ENCODE measurements at regions of chr15 and their contacts with region 1.

Region 1: DNA sequence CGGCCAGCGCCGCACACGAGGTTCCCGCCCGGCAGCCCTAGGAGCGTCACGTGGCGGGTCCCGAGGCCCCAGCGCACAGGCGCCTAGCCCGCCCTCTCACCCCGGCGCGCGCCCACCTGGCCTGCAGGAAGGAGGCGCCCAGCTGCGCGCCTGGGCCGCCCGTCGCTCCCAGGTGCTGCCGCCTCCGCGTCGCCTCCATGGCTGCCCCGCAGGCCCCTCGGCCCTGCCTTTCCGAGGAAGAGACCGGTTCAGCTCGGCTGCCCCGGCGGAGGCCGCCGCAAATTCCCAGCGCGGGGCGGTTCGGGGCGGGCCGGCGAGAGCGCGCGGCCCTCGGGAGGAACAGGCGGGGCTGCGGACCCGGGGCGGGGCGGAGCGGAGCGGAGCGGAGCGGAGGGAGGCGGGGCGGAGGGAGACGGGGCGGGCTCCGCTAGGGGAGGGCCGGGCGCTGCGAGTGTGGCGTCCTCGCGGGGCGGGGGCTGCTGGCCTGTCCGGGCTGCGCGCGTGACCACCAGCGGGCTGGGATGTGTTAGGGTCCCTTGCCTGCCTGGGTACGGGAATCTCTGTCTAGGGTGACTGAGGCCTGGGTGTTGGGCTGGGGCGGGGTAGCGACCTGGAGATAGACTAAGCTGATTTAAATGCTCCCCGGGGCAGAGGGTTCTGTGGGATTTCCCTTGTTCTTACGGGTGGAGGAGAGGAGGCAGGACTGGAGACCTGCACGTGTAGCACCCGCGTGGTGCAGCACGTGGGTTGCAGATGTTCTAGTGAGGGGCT is at the start of gene CLN6:
- DNase-seq: peak; percentile 89
- ATAC-seq: peak; percentile 92
- H3K4me3 Mint-ChIP-seq: peak within 1 kb of the TSS; percentile 90
- H3K27ac Mint-ChIP-seq: peak within 1 kb of the TSS; percentile 93
- H3K4me1 Mint-ChIP-seq: peaks cover 48% of the 10 kb centered on the region
- H3K27me3 Mint-ChIP-seq: no peaks in the 10 kb centered on the region
- total RNA-seq, gene CLN6: 64.5 to 69.7 TPM

Region 2: GRCh38 chr15:68195336-68196112 is 34.0 kb before region 1 on chr15:
- CTCF ChIA-PET with region 1: interaction called, 12 read pairs
- POLR2A ChIA-PET with region 1: no interaction called
- DNase-seq: peak; percentile 18
- ATAC-seq: no peak
- H3K4me3 Mint-ChIP-seq: no peak overlapping the region
- H3K27ac Mint-ChIP-seq: no peak overlapping the region
- H3K4me1 Mint-ChIP-seq: no peaks in the 10 kb centered on the region
- H3K27me3 Mint-ChIP-seq: no peaks in the 10 kb centered on the region

Region 3: DNA sequence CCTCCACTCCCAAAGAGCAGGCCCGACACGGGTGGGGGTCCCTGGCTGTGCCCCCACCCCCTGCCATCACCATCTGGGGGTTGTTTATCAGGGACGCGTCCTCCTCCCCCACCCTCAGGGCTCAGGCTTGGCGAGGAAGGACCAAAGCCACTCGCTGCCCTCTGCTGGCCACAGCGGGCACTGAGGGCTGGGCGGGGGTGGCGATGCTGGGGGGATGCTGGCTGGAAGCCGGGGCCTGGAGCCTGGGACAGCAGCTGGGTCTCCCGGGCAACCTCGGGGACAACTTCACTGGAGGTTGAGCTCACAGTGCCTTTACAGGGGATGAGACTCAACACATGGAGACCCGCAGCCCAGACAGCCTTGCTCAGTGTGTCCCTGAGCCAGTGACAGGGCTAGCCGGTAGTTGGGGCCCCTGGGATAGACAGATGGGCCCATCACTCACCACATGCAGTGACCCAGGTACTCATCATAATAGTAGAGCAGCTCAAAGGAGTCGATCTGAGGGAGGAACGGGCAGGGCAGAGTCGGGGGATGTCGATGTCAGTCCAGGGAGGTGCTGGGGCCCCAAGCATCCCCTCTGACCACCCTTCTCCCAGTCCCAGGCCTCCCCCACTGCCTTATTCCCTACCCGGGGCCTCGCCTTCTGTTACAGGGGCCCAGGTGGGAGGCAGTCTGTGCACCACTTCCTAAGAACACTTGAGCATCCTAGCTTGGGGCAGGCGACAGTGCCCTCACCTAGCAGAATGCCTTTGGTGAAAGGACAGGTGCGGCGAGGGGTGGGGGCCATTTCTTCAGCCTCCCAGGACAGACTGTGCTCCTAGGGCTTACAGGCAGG is 18.5 kb before region 1 on chr15:
- CTCF ChIA-PET with region 1: interaction called, 10 read pairs
- POLR2A ChIA-PET with region 1: interaction called, 5 read pairs
- DNase-seq: peak; percentile 61
- ATAC-seq: peak; percentile 47
- H3K4me3 Mint-ChIP-seq: no peak overlapping the region
- H3K27ac Mint-ChIP-seq: peak overlapping the region; percentile 55
- H3K4me1 Mint-ChIP-seq: peaks cover 31% of the 10 kb centered on the region
- H3K27me3 Mint-ChIP-seq: no peaks in the 10 kb centered on the region

Measured in activated CD8-positive, alpha-beta T cell treated with anti-CD3 and anti-CD28 coated beads, Interleukin-2, amount 10 ng/mL, durations not matched to agents 7 days and 5 days (primary cell).